Natural killer cell (primary cell): ENCODE measurements at regions of chr10 and their contacts with region 1.

Region 1: GRCh38 chr10:70363971-70364771 is 18.3 kb downstream of the LRRC20 start:
- DNase-seq: peak; percentile 76 to 93
- ATAC-seq: peak; percentile 96 to 100 (median 100)
- H3K4me3 ChIP-seq: no peak overlapping the region
- H3K4me3 Mint-ChIP-seq: no peak overlapping the region
- H3K27ac ChIP-seq: peak overlapping the region; percentile 26
- H3K27ac Mint-ChIP-seq: peak overlapping the region in 1 of 2 donors; percentile 61
- H3K4me1 ChIP-seq: peaks cover 16% of the 10 kb centered on the region
- H3K4me1 Mint-ChIP-seq: peaks cover 9% of the 10 kb centered on the region in 2 donors
- H3K27me3 ChIP-seq: no peaks in the 10 kb centered on the region
- H3K27me3 Mint-ChIP-seq: no peaks in the 10 kb centered on the region
- CTCF ChIP-seq: peak; percentile 86

Region 2: DNA sequence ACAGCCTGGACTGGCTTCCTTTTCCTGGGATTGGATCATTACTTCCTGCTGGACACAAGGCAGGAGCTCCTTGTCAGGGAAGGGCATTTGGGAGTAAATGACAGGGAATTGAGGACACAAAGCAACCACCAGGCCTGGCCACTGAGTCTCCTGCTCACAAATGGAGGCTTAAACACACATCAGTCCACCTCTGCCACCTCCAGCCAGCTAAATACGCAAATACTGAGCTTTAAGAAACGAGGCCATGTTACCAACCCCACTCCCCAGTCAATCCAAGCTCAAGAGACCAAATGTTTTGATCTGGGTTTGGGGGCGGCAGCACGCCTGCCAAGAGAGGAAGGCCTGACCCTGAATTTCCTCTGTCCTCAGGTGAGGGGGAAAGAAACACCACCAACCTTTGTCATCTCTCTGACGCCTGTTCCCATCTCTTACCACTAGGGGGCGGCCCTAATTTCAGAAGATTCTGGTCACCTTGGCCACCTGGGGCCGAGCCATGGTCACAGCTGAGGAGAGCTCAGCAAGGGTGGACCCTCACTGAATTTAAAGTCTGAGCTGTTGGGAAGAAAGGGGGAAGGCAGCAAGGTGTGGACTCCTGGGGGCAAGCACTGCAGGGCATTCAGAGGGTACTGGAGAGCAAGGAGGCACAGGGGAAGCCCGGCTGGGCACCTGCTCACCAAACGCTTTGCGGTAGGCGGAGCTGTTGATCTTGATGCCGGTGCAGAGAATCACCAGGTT is 248.1 kb before region 1 on chr10:
- intact Hi-C with region 1: loop called (anchors 1 kb)
- DNase-seq: peak; percentile 44 to 77
- ATAC-seq: peak; percentile 68 to 85 (median 85)
- H3K4me3 ChIP-seq: no peak overlapping the region
- H3K4me3 Mint-ChIP-seq: no peak overlapping the region
- H3K27ac ChIP-seq: no peak overlapping the region
- H3K27ac Mint-ChIP-seq: no peak overlapping the region
- H3K4me1 ChIP-seq: peaks cover 9% of the 10 kb centered on the region
- H3K4me1 Mint-ChIP-seq: peaks cover 5 to 6% of the 10 kb centered on the region in 2 donors
- H3K27me3 ChIP-seq: no peaks in the 10 kb centered on the region
- H3K27me3 Mint-ChIP-seq: no peaks in the 10 kb centered on the region
- CTCF ChIP-seq: peak; percentile 98

Region 3: DNA sequence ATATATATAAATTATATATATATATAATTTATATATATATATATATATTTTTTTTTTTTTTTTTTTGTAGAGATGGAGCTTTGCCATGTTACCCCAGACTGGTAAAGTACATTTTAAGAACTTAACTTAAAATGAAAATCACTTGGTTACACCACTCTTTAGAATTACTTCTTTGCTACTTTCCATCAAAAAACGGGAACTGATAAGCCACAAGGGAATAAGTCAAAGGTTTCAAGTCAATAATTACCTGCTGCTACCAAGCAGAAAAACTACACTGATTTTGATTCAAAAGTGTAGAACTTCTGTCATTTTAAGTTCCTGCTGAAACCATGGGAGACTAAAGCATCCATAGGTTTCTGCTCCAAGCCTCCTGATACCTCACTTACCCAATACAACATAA is 143.1 kb before region 1 on chr10:
- intact Hi-C with region 1: loop called (anchors 1 kb)
- DNase-seq: no peak
- ATAC-seq: no peak
- H3K4me3 ChIP-seq: no peak overlapping the region
- H3K4me3 Mint-ChIP-seq: peak overlapping the region; percentile 60
- H3K27ac ChIP-seq: no peak overlapping the region
- H3K27ac Mint-ChIP-seq: peak overlapping the region; percentile 54 to 67
- H3K4me1 ChIP-seq: no peaks in the 10 kb centered on the region
- H3K4me1 Mint-ChIP-seq: peaks cover 9 to 12% of the 10 kb centered on the region in 2 donors
- H3K27me3 ChIP-seq: no peaks in the 10 kb centered on the region
- H3K27me3 Mint-ChIP-seq: no peaks in the 10 kb centered on the region
- CTCF ChIP-seq: no peak

Region 4: GRCh38 chr10:70272925-70273316 is 91.2 kb before region 1 on chr10:
- intact Hi-C with region 1: loop called (anchors 10 kb)
- DNase-seq: peak in 1 of 2 donors; percentile 66
- ATAC-seq: peak; percentile 76 to 83 (median 82)
- H3K4me3 ChIP-seq: no peak overlapping the region
- H3K4me3 Mint-ChIP-seq: no peak overlapping the region
- H3K27ac ChIP-seq: no peak overlapping the region
- H3K27ac Mint-ChIP-seq: no peak overlapping the region
- H3K4me1 ChIP-seq: peaks cover 5% of the 10 kb centered on the region
- H3K4me1 Mint-ChIP-seq: no peaks in the 10 kb centered on the region
- H3K27me3 ChIP-seq: no peaks in the 10 kb centered on the region
- H3K27me3 Mint-ChIP-seq: peaks cover 0 to 3% of the 10 kb centered on the region in 2 donors
- CTCF ChIP-seq: peak; percentile 61

Region 5: GRCh38 chr10:70379581-70380176 is 15.5 kb after region 1 on chr10:
- intact Hi-C with region 1: no loop called
- DNase-seq: peak in 1 of 2 donors; percentile 40
- ATAC-seq: no peak
- H3K4me3 ChIP-seq: no peak overlapping the region
- H3K4me3 Mint-ChIP-seq: no peak overlapping the region
- H3K27ac ChIP-seq: no peak overlapping the region
- H3K27ac Mint-ChIP-seq: no peak overlapping the region
- H3K4me1 ChIP-seq: peaks cover 15% of the 10 kb centered on the region
- H3K4me1 Mint-ChIP-seq: peaks cover 6 to 12% of the 10 kb centered on the region in 2 donors
- H3K27me3 ChIP-seq: peaks cover 2% of the 10 kb centered on the region
- H3K27me3 Mint-ChIP-seq: peaks cover 0 to 3% of the 10 kb centered on the region in 2 donors
- CTCF ChIP-seq: peak; percentile 18